PC-3 (cell line): ENCODE measurements at regions of chr7 and their contacts with region 1.

Region 1: DNA sequence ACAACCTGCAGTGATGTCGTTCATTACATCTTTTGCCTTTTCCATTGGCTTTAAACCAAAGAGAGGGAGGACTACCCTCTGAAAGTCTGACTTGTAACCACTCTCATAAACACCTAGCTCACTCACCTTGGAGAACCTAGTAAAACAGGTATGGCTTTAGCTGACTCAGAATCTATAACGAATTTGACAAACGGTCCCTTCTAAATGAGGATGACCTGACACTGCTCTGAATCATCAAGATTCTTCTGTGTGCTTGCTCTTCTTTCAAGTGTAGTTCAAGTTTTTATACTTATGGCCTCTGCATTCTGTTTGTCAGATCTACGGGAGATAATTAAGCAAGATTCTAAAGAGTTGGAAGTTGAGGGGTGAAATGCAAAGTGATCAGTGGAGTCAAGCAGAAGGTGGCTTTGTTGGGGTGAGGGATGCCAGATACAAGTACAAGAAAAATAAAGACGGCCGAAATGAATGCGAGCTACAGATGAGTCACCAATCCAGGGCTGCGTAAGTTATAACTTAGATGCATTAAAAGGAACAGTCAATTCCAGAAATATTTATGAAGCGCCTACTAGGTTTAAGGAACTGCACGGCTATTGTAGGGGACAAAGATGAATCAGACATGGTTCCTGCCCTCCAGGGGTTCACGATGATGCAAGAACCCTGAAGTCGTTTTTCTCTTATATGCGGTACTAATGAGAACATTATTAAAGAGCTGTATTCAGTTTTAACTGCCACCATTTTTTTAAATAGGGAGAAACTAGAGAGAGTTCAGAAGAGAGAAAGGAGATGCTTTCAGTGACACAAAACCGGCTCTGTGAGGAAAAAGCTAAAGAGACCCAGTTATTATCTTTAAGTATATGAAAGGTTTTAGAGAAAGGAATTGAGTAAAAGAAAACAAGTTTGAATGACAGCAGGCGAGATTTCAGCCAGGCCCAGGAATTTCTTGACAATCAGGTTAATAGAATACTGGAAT is 6.5 kb downstream of the HIPK2 start:
- DNase-seq: peak; percentile 92
- ATAC-seq: peak; percentile 53
- H3K4me3 ChIP-seq: peak overlapping the region; percentile 54
- H3K27ac ChIP-seq: peak overlapping the region; percentile 99
- H3K4me1 ChIP-seq: peaks cover 56% of the 10 kb centered on the region
- H3K27me3 ChIP-seq: no peaks in the 10 kb centered on the region
- CTCF ChIP-seq: no peak

Region 2: GRCh38 chr7:139242741-139243281 is 528.5 kb before region 1 on chr7:
- CTCF ChIA-PET with region 1: no interaction called
- POLR2A ChIA-PET with region 1: no interaction called
- intact Hi-C with region 1: no loop called
- DNase-seq: peak; percentile 80
- ATAC-seq: peak; percentile 90
- H3K4me3 ChIP-seq: no peak overlapping the region
- H3K27ac ChIP-seq: peak overlapping the region; percentile 38
- H3K4me1 ChIP-seq: peaks cover 19% of the 10 kb centered on the region
- H3K27me3 ChIP-seq: no peaks in the 10 kb centered on the region
- CTCF ChIP-seq: no peak

Region 3: DNA sequence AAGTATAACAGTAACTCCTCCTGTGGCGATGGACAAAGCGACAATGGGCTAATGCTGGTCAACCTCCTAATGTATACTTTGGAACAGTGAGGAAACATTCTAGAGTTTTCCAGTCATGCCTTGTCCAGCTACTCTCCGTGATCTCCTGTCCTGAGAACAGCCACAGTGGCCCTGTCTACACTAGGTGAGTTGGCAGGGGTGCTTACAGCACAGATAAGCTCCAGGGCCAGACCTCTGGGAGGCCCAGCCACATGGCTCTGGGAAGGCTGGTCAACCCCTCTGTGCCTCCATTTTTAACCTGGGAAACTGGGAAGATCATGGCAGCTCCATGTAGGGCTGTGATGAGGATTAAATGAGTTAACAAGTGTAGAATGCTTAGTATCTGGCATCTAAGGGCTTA is 190.9 kb before region 1 on chr7:
- CTCF ChIA-PET with region 1: no interaction called
- POLR2A ChIA-PET with region 1: no interaction called
- intact Hi-C with region 1: no loop called
- DNase-seq: no peak
- ATAC-seq: no peak
- H3K4me3 ChIP-seq: no peak overlapping the region
- H3K27ac ChIP-seq: no peak overlapping the region
- H3K4me1 ChIP-seq: no peaks in the 10 kb centered on the region
- H3K27me3 ChIP-seq: no peaks in the 10 kb centered on the region
- CTCF ChIP-seq: no peak

Region 4: DNA sequence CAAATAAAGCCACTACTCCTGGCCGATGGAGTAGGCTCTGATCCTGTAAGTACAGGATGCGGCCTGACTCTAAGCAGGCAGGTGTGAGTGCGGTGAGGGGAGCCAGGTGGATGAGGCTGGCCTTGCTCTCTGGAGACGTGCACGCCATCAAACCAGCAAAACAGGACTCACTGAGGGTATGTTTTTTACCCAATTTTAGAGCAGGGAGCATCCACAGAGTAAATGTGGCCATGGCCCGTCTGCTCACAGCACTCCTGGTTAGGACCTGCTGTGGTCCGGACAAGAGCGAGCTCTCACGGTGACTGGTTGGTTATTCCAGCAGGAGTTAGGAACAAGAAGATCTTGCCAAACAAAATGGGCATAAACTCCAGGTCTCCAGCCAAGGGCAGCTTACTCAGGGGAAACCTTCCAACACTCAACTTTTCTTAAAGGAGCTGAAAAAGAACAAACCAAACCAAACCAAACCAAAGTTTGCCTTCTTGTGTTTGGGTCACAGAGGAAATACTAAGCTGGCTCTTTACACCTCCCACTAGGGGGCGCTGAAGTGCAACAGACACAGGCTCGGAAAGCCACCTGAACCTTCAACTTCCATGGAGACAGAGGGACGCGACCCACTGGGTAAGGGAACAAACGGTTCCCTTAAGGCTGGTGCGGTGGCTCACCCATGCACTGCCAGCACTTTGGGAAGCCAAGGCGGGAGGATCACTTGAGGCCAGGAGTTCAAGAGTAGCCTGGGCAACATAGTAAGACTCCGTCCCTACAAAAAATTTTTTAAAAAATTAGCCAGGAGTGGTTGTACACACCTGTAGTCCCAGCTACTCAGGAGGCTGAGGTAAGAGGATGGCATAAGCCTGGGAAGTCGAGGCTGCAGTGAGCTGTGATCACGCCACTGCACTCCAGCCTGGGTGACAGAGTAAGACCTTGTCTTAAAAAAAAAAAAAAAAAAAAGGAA is 125.4 kb before region 1 on chr7:
- CTCF ChIA-PET with region 1: interaction called, 6 read pairs
- POLR2A ChIA-PET with region 1: interaction called, 5 read pairs
- intact Hi-C with region 1: loop called (anchors 1 kb)
- DNase-seq: peak; percentile 81
- ATAC-seq: peak; percentile 67
- H3K4me3 ChIP-seq: no peak overlapping the region
- H3K27ac ChIP-seq: peak overlapping the region; percentile 51
- H3K4me1 ChIP-seq: peaks cover 17% of the 10 kb centered on the region; the same call in 1 of the 2 replicates
- H3K27me3 ChIP-seq: no peaks in the 10 kb centered on the region
- CTCF ChIP-seq: peak; percentile 88

Region 5: GRCh38 chr7:139680676-139681462 is 90.4 kb before region 1 on chr7:
- CTCF ChIA-PET with region 1: no interaction called
- POLR2A ChIA-PET with region 1: interaction called, 3 read pairs
- intact Hi-C with region 1: loop called (anchors 1 kb)
- DNase-seq: peak; percentile 98
- ATAC-seq: peak; percentile 66
- H3K4me3 ChIP-seq: peak overlapping the region; percentile 17; the same call in 1 of the 2 replicates
- H3K27ac ChIP-seq: peak overlapping the region; percentile 100
- H3K4me1 ChIP-seq: peaks cover 61% of the 10 kb centered on the region
- H3K27me3 ChIP-seq: no peaks in the 10 kb centered on the region
- CTCF ChIP-seq: no peak

Region 6: GRCh38 chr7:139753081-139753692 is 18.1 kb before region 1 on chr7:
- CTCF ChIA-PET with region 1: no interaction called
- POLR2A ChIA-PET with region 1: no interaction called
- intact Hi-C with region 1: loop called (anchors 2 kb)
- DNase-seq: peak; percentile 69
- ATAC-seq: peak; percentile 67
- H3K4me3 ChIP-seq: no peak overlapping the region
- H3K27ac ChIP-seq: peak overlapping the region; percentile 51
- H3K4me1 ChIP-seq: peaks cover 22% of the 10 kb centered on the region
- H3K27me3 ChIP-seq: no peaks in the 10 kb centered on the region
- CTCF ChIP-seq: peak; percentile 42; the same call in 1 of the 2 replicates